Tibial artery (tissue), 4 donors: ENCODE measurements at regions of chr1 and their contacts with region 1.

Region 1: DNA sequence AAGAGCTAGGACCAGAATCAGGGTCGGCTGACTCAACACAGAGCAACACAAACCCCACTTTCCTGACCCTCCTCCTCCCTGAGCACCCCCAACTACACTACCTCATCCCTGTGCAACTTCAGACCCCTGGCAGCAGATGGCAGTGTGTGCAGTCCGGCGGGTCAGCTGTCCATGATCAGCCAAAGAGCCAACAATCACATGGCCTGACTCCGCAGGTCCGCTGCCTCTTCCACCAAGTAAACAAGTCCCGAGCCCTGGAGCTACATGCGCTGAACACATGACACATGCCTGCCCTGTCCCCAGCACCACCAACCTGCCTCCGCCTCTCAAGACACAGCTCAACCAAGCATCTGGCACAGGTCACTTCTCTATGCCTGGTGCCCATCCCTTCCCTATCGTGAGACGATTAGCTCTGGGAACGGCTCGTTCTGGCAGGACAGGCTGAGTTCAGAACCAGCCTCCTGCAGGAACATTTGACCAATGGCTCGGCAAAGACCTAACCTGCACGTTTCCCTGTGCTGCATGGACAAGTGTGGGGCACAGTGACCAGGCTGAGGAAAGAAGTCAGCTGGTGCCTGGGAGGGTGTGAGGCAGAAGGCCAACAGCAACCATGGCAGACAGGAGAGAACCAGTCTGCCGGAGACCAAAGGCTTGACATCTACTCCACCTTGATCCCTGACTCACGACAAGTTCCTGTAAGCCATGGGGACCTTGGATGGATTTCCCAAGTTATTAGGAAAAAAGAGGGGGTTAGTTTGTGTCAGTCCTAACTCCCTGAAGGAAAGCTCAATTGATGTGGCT is 60.3 kb downstream of the CD46 start:
- DNase-seq: peak; percentile 83 to 92
- H3K4me3 ChIP-seq: peak overlapping the region; percentile 20 to 31
- H3K27ac ChIP-seq: peak overlapping the region; percentile 100
- H3K4me1 ChIP-seq: peaks cover 0 to 100% (median 98%) of the 10 kb centered on the region in 4 donors
- H3K27me3 ChIP-seq: no peaks in the 10 kb centered on the region
- CTCF ChIP-seq: peak; percentile 47 to 50

Region 2: GRCh38 chr1:207751790-207752455 is 60.2 kb before region 1 on chr1 and contains the start of gene CD46:
- intact Hi-C with region 1: loop called (anchors 5 kb)
- DNase-seq: peak; percentile 97 to 98
- H3K4me3 ChIP-seq: peak within 1 kb of the TSS; percentile 83 to 88
- H3K27ac ChIP-seq: peak within 1 kb of the TSS; percentile 90 to 92
- H3K4me1 ChIP-seq: peaks cover 0 to 52% (median 37%) of the 10 kb centered on the region in 4 donors
- H3K27me3 ChIP-seq: no peaks in the 10 kb centered on the region
- CTCF ChIP-seq: peak in 1 of 2 experiments; percentile 26

Region 3: DNA sequence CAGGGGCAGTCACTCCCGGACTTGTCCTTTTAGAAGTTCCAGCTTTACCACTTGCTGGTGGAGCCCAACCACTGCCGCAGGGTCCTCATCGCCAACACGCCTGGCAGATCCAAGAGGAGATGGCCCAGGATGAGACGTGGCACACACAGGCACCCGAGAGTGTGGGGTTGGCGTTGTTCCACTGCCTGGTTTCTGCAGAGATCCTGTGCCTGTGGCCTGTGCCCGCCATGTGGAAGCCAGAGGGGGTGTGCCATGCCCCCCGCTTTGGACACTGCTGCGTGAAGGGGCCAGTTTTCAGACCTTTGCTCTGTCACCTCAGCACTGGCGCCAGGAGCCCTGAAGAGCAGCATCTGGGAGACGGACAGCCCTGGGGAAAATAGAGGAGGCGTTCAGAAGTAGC is 49.5 kb before region 1 on chr1:
- intact Hi-C with region 1: no loop called
- DNase-seq: no peak
- H3K4me3 ChIP-seq: no peak overlapping the region
- H3K27ac ChIP-seq: no peak overlapping the region
- H3K4me1 ChIP-seq: no peaks in the 10 kb centered on the region
- H3K27me3 ChIP-seq: no peaks in the 10 kb centered on the region
- CTCF ChIP-seq: no peak

Region 4: DNA sequence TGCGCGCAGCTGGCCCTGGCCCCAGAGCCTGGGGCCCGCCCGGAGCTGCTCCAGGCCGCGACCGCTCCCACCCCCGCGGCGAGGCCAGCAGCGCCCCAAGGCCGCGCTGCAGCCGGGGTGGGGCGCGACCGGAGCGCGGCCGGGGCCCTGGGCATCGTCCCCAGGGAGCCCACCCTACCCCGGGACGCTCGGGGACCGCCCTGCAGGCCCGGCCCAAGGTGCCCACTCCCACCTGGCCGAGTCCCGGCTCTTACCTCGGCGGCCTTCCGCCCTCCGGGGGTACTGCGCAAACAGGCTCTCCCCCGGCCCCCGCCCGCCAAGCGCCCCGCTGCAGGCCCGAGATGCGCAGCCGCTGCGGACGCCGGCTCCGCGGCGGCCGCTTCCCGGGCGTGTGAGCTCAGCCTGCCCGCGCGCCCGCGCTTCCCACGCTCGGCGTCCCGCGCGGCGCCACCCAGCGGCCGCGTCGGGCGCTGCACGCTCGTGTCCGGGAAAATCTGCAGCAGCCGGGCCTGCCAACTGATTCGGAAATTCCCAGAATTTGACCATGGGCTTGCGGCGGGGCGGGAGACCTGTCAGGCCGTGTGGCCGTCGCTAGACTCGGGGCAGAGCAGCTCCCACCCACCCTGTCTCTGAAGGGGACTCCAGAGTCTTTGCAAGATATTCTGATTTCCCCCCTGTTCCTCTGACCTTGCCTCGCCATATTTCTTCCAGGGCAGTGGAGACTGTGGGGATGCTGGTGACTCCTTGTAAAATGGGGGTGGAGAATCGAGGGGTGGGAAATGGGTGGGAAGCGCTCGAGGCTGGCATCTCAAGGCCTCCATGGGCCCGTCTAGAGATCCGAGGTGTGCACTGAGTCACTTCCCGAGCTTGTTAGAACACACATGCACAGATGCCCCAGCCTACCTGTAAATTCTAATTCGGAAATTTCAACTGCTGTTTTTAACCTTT is 56.9 kb after region 1 on chr1:
- intact Hi-C with region 1: no loop called
- DNase-seq: peak; percentile 75 to 90
- H3K4me3 ChIP-seq: peak overlapping the region; percentile 91 to 97
- H3K27ac ChIP-seq: peak overlapping the region; percentile 94 to 99
- H3K4me1 ChIP-seq: peaks cover 3 to 54% (median 42%) of the 10 kb centered on the region in 4 donors
- H3K27me3 ChIP-seq: no peaks in the 10 kb centered on the region
- CTCF ChIP-seq: peak; percentile 74 to 98